Activated B cell treated with CpG ODN at 0.5 μM for 24 hours (primary cell): ENCODE measurements at regions of chr9 and their contacts with region 1.

Region 1: DNA sequence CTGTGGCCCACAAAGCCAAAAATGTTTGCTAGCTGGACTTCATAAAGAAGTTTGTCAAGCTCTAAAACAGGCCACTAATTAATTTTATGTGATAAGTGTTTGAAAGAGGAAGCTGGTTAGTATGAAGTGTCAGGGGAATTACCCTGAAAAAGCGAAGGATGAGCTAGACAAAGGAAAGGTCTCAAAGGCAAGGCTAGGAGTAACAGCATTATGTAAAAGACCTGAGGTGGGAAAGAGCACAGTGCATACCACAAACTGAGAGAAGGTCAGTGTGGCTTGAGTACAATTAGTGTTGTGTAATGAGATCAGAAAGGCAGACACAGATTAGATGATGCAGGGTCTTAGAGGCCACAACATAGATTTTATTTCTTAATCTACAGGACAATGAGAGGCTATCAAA is 29.6 kb downstream of the RC3H2 start:
- DNase-seq: no peak
- ATAC-seq: peak; percentile 49
- H3K4me3 Mint-ChIP-seq: no peak overlapping the region
- H3K27ac Mint-ChIP-seq: peak overlapping the region; percentile 66
- H3K4me1 Mint-ChIP-seq: peaks cover 16% of the 10 kb centered on the region
- H3K27me3 Mint-ChIP-seq: no peaks in the 10 kb centered on the region
- CTCF ChIP-seq: no peak

Region 2: GRCh38 chr9:122897969-122898368 is 22.4 kb after region 1 on chr9:
- CTCF ChIA-PET with region 1: no interaction called
- POLR2A ChIA-PET with region 1: no interaction called
- intact Hi-C with region 1: loop called (anchors 2 kb)
- DNase-seq: no peak
- ATAC-seq: no peak
- H3K4me3 Mint-ChIP-seq: no peak overlapping the region
- H3K27ac Mint-ChIP-seq: no peak overlapping the region
- H3K4me1 Mint-ChIP-seq: peaks cover 35% of the 10 kb centered on the region
- H3K27me3 Mint-ChIP-seq: no peaks in the 10 kb centered on the region
- CTCF ChIP-seq: no peak